Left ventricle myocardium superior (tissue), 1 donor: ENCODE measurements at regions of chr16 and their contacts with region 1.

Region 1: GRCh38 chr16:53054670-53055485 is at the start of gene CHD9:
- DNase-seq: peak; percentile 94
- ATAC-seq: peak; percentile 91
- total RNA-seq, gene CHD9: 36.4 TPM

Region 2: DNA sequence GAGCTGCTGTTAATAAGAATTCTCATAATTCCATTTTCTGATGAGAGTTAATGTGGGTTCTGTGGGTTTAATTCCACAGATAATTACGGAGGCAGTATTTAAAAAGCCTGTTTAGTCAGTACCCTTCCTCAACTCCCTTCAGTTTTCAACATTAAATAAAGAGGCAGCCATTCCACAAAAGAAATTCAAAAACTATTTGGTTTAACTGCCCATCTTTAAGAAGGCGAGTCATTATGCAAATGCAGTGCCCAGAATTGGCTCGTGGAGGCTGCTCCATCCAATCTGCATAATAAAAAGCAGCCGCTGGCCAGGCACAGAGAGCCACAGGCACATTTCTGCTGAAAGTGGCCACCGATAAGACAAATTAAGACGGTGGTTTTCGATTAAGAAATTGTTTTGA is 313.5 kb before region 1 on chr16:
- intact Hi-C with region 1: no loop called
- DNase-seq: no peak
- ATAC-seq: no peak

Region 3: DNA sequence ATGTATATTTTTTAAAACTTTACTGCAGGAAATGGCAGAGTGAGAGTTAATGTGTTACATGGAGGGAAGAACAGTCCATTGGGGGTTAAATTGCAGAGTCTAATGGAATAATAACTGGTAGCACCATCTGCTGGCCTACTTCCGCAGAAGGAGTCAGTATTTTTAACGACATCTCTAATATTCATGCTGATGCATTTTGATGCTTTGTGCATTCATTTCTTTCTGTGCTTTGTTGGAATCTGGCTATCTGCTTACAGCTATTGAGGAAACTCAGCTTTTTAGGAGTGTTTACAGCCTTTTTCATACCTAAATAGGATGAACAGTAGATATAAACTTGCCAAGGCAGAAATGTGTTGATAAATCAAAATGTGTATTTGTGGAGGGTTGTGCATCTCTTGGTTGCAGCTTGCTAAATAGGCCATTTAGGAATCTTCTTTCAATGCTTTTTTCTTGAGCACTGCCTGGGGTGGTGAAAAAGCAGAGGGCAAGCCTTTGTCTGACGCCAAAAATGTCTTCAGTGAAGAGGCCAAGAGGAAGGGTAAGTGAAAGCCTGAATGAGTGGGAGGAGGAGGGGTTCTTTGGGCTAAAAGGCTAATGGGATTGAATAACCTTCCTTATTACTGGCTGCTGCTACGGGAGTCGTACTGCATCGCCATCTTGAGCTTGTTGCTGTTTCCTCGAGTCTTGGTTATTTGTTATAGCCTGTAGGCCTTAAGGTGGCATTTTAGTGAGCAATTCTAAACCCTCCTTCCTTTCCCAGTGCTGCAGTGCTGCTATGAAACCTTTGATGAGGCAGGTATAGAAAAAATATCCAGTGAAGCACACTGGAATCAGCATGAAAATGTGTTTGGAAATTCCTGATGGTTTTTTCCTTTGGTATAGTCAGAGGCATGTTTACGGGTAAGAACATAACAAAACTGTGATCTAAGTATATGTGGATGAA is 153.2 kb after region 1 on chr16:
- intact Hi-C with region 1: loop called (anchors 10 kb)
- DNase-seq: no peak
- ATAC-seq: peak; percentile 96